Naive thymus-derived CD8-positive, alpha-beta T cell (primary cell): ENCODE measurements at regions of chr22 and their contacts with region 1.

Region 1: GRCh38 chr22:41468381-41469217 is at the starts of genes ACO2 and PHF5A:
- DNase-seq: peak; percentile 91 to 100 (median 98)
- ATAC-seq: peak; percentile 89 to 90
- H3K4me3 Mint-ChIP-seq: peak within 1 kb of the TSS; percentile 89 to 93 (median 92)
- H3K27ac Mint-ChIP-seq: peak within 1 kb of the TSS; percentile 98 to 100 (median 100)
- H3K4me1 Mint-ChIP-seq: peaks cover 17 to 70% (median 54%) of the 10 kb centered on the region in 4 donors
- H3K27me3 Mint-ChIP-seq: no peaks in the 10 kb centered on the region
- polyA plus RNA-seq, gene ACO2: 64.2 to 91.9 (median 72.3) TPM
- polyA plus RNA-seq, gene PHF5A: 17.2 to 21.4 (median 17.9) TPM

Region 2: GRCh38 chr22:40856513-40857308 is 611.9 kb before region 1 on chr22 and contains the starts of genes ST13 and XPNPEP3:
- POLR2A ChIA-PET with region 1: interaction called, 18 read pairs
- DNase-seq: peak; percentile 95 to 99 (median 97)
- ATAC-seq: peak; percentile 88 to 89
- H3K4me3 Mint-ChIP-seq: peak within 1 kb of the TSS; percentile 97 to 100 (median 99)
- H3K27ac Mint-ChIP-seq: peak within 1 kb of the TSS; percentile 98 to 100 (median 100)
- H3K4me1 Mint-ChIP-seq: peaks cover 9 to 69% (median 63%) of the 10 kb centered on the region in 4 donors
- H3K27me3 Mint-ChIP-seq: no peaks in the 10 kb centered on the region
- polyA plus RNA-seq, gene ST13: 244 to 283 (median 260) TPM
- polyA plus RNA-seq, gene XPNPEP3: 5.9 to 11.5 (median 7.1) TPM

Region 3: DNA sequence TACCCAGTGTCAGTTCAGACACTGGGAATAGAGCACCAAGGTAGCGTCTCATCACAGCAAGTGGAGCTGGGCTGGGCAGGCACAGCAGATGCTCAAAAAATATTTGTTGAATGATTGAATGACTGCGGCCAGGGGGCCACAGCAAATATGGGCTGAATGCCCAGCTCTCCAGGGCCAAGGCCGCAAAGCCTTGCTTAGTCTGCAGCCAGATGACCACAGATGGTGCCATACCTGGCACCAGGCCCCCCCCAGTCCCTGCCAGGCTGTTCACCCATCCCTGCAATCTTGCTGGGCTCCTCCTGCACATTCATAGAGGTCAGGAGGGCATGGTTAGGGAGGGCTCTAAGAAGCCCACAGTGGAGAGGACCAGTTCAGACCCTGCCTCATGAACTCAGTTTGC is 134.4 kb before region 1 on chr22:
- POLR2A ChIA-PET with region 1: no interaction called
- DNase-seq: no peak
- ATAC-seq: no peak
- H3K4me3 Mint-ChIP-seq: no peak overlapping the region
- H3K27ac Mint-ChIP-seq: peak overlapping the region in 1 of 10 donors; percentile 23
- H3K4me1 Mint-ChIP-seq: peaks cover 3 to 26% (median 10%) of the 10 kb centered on the region in 4 donors
- H3K27me3 Mint-ChIP-seq: no peaks in the 10 kb centered on the region

Region 4: GRCh38 chr22:41381329-41382097 is 87.1 kb before region 1 on chr22 and contains the start of gene TEF:
- POLR2A ChIA-PET with region 1: interaction called, 30 read pairs
- DNase-seq: peak; percentile 95 to 100 (median 99)
- ATAC-seq: peak; percentile 83 to 86
- H3K4me3 Mint-ChIP-seq: peak within 1 kb of the TSS; percentile 88 to 97 (median 92)
- H3K27ac Mint-ChIP-seq: peak within 1 kb of the TSS; percentile 92 to 99 (median 98)
- H3K4me1 Mint-ChIP-seq: peaks cover 6 to 24% (median 21%) of the 10 kb centered on the region in 4 donors
- H3K27me3 Mint-ChIP-seq: no peaks in the 10 kb centered on the region
- polyA plus RNA-seq, gene TEF: 2.0 to 5.7 (median 4.4) TPM

Region 5: DNA sequence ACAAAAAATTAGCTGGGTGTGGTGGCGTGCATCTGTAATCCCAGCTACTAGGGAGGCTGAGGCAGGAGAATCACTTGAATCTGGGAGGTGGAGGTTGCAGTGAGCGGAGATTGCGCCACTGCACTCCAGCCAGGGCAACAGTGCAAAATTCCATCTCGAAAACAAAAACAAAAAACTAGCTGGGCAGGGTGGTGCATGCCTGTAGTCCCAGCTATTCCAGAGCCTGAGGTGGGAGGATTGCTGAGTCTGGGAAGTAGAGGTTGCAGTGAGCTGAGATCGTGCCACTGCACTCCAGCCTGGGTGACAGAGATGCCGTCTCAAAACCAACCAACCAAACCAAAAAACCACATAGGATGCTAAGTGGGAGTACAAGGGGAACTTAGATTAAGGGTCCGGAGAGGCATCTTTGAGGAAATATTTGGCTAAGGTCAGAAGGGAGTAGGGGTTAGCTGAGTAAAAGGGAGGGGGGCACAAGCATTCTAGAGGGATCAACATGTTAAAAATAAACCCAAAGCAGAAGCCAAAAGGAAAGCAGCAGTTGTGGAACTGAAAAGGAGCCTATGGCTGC is 10.4 kb before region 1 on chr22:
- POLR2A ChIA-PET with region 1: interaction called, 11 read pairs
- DNase-seq: no peak
- ATAC-seq: no peak
- H3K4me3 Mint-ChIP-seq: no peak overlapping the region
- H3K27ac Mint-ChIP-seq: peak overlapping the region in 8 of 10 donors; percentile 44 to 82 (median 56)
- H3K4me1 Mint-ChIP-seq: peaks cover under 1 to 7% (median 5%) of the 10 kb centered on the region in 4 donors
- H3K27me3 Mint-ChIP-seq: no peaks in the 10 kb centered on the region

Region 6: GRCh38 chr22:41501209-41501608 is 32.6 kb after region 1 on chr22:
- POLR2A ChIA-PET with region 1: no interaction called
- DNase-seq: peak in 4 of 10 donors; percentile 17 to 62 (median 26)
- ATAC-seq: peak; percentile 71 to 72
- H3K4me3 Mint-ChIP-seq: no peak overlapping the region
- H3K27ac Mint-ChIP-seq: peak overlapping the region in 7 of 10 donors; percentile 5 to 83 (median 66)
- H3K4me1 Mint-ChIP-seq: peaks cover 0 to 9% (median 2%) of the 10 kb centered on the region in 4 donors
- H3K27me3 Mint-ChIP-seq: no peaks in the 10 kb centered on the region

Region 7: DNA sequence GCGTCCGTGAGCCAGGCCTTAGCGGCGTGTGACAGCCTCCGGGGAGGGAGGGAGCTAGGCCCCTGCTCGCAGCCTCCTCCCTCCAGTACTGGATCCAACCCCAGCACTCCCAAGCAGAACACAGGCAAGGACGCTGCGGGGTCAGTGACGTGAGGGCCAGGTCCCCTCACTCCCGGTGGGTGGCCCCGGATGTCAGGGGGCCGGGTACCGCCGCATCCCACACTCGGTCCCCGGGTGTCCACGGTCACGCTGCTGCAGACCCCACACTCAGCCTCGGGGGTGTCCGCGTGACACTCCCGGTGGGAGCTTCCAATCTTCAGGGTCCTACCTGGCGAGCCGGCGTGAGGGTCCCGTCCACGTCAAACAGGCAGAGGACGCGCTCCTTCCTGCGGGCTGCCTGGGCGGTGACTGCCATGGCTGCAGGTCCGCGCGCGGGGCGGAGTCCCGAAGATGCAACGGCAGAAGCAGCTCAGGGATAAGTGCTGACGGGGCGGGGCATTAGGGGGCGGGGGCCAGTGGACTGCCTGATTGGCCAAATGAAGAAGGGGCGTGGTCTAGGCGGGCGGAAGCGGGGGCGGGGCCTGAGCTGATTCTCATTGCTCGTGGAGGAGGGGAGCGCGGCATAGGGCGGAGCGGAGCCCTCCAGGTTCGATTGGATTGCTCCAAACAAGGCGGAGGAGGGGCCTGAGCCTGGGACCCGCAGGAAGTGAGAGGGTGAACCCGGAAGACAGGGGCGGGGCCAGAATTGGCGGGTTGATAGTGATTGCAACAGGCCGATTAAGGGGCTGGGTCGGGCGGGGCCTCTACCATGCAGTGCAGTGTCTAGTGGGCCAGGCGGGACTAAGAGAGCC is 121.0 kb after region 1 on chr22 and contains the start of gene PMM1:
- POLR2A ChIA-PET with region 1: interaction called, 15 read pairs
- DNase-seq: peak; percentile 98 to 100 (median 100)
- ATAC-seq: peak; percentile 94 to 97
- H3K4me3 Mint-ChIP-seq: peak within 1 kb of the TSS; percentile 84 to 96 (median 94)
- H3K27ac Mint-ChIP-seq: peak within 1 kb of the TSS; percentile 28 to 95 (median 89)
- H3K4me1 Mint-ChIP-seq: peaks cover 5 to 30% (median 15%) of the 10 kb centered on the region in 4 donors
- H3K27me3 Mint-ChIP-seq: no peaks in the 10 kb centered on the region
- polyA plus RNA-seq, gene PMM1: 29.9 to 32.8 (median 32.4) TPM